SK-N-SH (cell line): ENCODE measurements at regions of chr22 and their contacts with region 1.

Region 1: GRCh38 chr22:20981787-20982562 is at the start of gene LZTR1:
- DNase-seq: peak; percentile 94
- H3K4me3 ChIP-seq: peak within 1 kb of the TSS; percentile 71 to 97
- H3K27ac ChIP-seq: peak within 1 kb of the TSS; percentile 77 to 98
- H3K4me1 ChIP-seq: peaks cover 6 to 24% of the 10 kb centered on the region in 2 experiments; a peak in 2 of 4 replicates
- H3K27me3 ChIP-seq: no peaks in the 10 kb centered on the region
- CTCF ChIP-seq: peak; percentile 62
- EP300 ChIP-seq: no peak; a peak in 1 of 4 replicates
- RAD21 ChIP-seq: peak; percentile 54
- polyA plus RNA-seq, gene LZTR1: 37.7 and 41.5 TPM in 2 replicates

Region 2: DNA sequence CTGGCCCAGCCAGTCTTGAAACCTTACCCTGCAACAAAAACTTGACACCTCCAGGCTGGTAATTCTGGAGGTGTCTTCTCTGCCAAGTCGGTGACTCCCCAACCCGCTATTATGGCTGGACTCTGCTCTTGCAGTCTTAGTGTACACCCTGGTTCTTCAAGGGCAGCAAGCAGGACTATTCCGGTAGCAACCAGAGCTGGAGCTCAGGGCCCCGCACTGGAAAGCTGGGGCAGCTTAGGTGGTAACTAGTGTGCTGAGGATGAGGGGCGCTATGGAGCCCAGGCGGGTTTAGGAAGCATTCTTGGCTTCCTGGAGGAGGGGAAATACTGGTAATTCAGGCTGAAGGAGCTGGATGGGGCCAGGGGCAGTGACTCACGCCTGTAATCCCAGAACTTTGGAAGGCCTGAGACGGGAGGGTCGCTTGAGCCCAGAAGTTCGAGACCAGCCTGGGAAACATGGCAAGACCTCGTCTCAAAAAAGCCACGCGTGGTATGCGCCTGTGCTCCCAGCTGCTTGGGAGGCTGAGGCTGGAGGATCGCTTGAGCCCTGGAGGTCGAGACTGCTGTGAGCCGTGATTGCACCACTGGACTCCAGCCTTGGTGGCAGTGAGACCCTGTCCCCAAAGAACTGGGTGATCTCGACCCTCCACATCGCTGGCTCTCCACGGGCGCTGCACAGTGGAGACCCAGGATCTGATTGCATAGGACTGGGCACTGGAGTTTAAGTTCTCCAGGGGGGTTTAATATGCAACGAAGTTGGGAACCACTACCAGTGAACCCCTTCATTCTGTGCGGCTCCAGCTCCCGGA is 25.5 kb before region 1 on chr22:
- CTCF ChIA-PET with region 1: interaction called, 44 read pairs
- POLR2A ChIA-PET with region 1: interaction called, 10 read pairs
- DNase-seq: no peak
- H3K4me3 ChIP-seq: no peak overlapping the region
- H3K27ac ChIP-seq: no peak overlapping the region
- H3K4me1 ChIP-seq: no peaks in the 10 kb centered on the region; a peak in 1 of 4 replicates
- H3K27me3 ChIP-seq: no peaks in the 10 kb centered on the region
- CTCF ChIP-seq: no peak
- EP300 ChIP-seq: no peak
- RAD21 ChIP-seq: no peak

Region 3: GRCh38 chr22:20965104-20965887 is 16.7 kb before region 1 on chr22:
- CTCF ChIA-PET with region 1: interaction called, 44 read pairs
- POLR2A ChIA-PET with region 1: interaction called, 6 read pairs
- DNase-seq: peak; percentile 79
- H3K4me3 ChIP-seq: peak overlapping the region; percentile 46 to 51; a peak in 2 of 4 replicates
- H3K27ac ChIP-seq: no peak overlapping the region
- H3K4me1 ChIP-seq: peaks cover 0 to 26% of the 10 kb centered on the region in 2 experiments; a peak in 1 of 4 replicates
- H3K27me3 ChIP-seq: no peaks in the 10 kb centered on the region
- CTCF ChIP-seq: no peak
- EP300 ChIP-seq: no peak
- RAD21 ChIP-seq: no peak

Region 4: GRCh38 chr22:21014202-21014725 is 32.3 kb after region 1 on chr22:
- CTCF ChIA-PET with region 1: interaction called, 3 read pairs
- POLR2A ChIA-PET with region 1: interaction called, 13 read pairs
- DNase-seq: peak; percentile 96
- H3K4me3 ChIP-seq: peak overlapping the region; percentile 76 to 78
- H3K27ac ChIP-seq: peak overlapping the region; percentile 71 to 97
- H3K4me1 ChIP-seq: peaks cover 15 to 45% of the 10 kb centered on the region in 2 experiments; a peak in 3 of 4 replicates
- H3K27me3 ChIP-seq: no peaks in the 10 kb centered on the region
- CTCF ChIP-seq: no peak
- EP300 ChIP-seq: peak in 1 of 2 experiments; percentile 42; a peak in 1 of 4 replicates
- RAD21 ChIP-seq: no peak; the same call in 1 of the 2 replicates